ENCODE measurements at regions of chr12 and their contacts with region 1.

Region 1: DNA sequence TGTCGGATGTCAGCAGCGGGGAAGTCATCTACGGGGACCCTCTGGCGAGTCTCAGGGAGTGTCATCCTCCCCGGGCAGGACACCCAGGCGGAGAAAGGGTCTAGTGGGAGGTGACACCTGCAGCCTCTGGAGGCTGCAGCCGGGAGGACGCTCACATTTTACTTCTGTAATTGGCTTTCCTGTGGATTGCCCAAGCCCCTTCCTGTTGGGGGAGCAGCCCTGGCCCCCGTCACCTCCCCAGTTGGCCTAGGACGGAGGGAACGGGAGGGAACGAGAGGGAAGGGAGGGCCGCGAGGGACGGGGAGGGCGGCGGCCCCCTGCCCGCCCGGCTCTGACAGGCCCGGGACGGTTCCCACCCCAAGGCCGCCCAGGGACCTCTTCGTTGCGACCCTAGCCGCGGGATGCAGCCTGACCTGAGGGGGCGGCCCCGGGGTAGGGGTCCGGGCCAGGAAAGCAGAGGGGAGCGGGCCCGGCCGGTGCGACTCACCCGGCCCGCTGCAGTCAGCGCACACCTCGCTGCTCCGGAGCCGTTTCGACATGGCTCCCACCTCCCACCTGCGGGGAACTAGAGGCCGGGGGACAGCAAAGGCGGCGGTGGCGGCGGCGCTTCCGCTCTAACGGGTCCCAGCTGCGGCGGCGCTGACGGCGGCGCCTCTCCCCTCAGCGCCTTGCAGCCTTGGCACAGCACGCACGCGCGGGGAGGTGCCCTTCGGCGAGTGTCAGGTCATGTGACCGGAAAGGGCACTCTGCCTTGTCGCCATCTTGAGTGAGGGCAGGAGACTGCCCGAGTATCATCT is at the start of gene GIT2:
- DNase-seq: peak; percentile 96
- H3K4me3 Mint-ChIP-seq: peak within 1 kb of the TSS; percentile 99
- H3K27ac Mint-ChIP-seq: peak within 1 kb of the TSS; percentile 94
- H3K4me1 Mint-ChIP-seq: peaks cover 64% of the 10 kb centered on the region
- H3K27me3 Mint-ChIP-seq: no peaks in the 10 kb centered on the region
- total RNA-seq, gene GIT2: 107 to 112 TPM

Region 2: GRCh38 chr12:109967383-109968031 is 28.4 kb before region 1 on chr12:
- CTCF ChIA-PET with region 1: interaction called, 5 read pairs
- POLR2A ChIA-PET with region 1: interaction called, 16 read pairs
- DNase-seq: peak; percentile 31
- H3K4me3 Mint-ChIP-seq: peak overlapping the region; percentile 61
- H3K27ac Mint-ChIP-seq: peak overlapping the region; percentile 85
- H3K4me1 Mint-ChIP-seq: peaks cover 45% of the 10 kb centered on the region
- H3K27me3 Mint-ChIP-seq: no peaks in the 10 kb centered on the region

Region 3: DNA sequence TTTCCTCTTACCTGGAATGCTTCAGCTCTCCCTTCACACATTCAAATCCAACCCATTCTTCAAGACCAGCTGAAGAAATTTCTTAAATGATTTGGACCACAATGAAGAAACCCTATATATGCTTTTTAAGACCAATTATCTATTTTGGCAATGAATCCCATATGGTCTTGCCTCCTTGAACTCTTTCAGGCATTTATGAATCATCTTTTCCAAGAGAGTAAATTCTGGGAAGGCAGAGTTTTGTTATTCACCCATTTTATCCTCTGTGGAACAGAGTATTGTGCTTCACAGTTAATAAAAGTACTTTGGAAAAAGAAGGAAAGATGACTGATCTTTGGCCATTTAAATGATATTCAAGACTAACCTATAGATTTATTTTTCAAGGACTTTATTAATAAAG is 13.7 kb before region 1 on chr12:
- CTCF ChIA-PET with region 1: no interaction called
- POLR2A ChIA-PET with region 1: interaction called, 20 read pairs
- DNase-seq: no peak
- H3K4me3 Mint-ChIP-seq: no peak overlapping the region
- H3K27ac Mint-ChIP-seq: peak overlapping the region; percentile 4
- H3K4me1 Mint-ChIP-seq: peaks cover 56% of the 10 kb centered on the region
- H3K27me3 Mint-ChIP-seq: no peaks in the 10 kb centered on the region

Region 4: GRCh38 chr12:110012137-110012536 is 16.3 kb after region 1 on chr12:
- CTCF ChIA-PET with region 1: interaction called, 4 read pairs
- POLR2A ChIA-PET with region 1: interaction called, 38 read pairs
- DNase-seq: peak; percentile 42
- H3K4me3 Mint-ChIP-seq: no peak overlapping the region
- H3K27ac Mint-ChIP-seq: peak overlapping the region; percentile 69
- H3K4me1 Mint-ChIP-seq: peaks cover 70% of the 10 kb centered on the region
- H3K27me3 Mint-ChIP-seq: no peaks in the 10 kb centered on the region

Measured in activated CD4-positive, alpha-beta memory T cell treated with anti-CD3 and anti-CD28 coated beads, Interleukin-2, amount 10 ng/mL, durations not matched to agents 7 days and 5 days (primary cell).